Ascending aorta (tissue), 2 donors: ENCODE measurements at regions of chr9 and their contacts with region 1.

Region 1: GRCh38 chr9:134325817-134326723 is at the start of gene RXRA:
- DNase-seq: peak in 1 of 2 donors; percentile 87
- H3K4me3 ChIP-seq: peak within 1 kb of the TSS; percentile 86 to 91
- H3K27ac ChIP-seq: peak within 1 kb of the TSS; percentile 97 to 99
- H3K4me1 ChIP-seq: peaks cover 21 to 57% of the 10 kb centered on the region in 2 donors
- H3K27me3 ChIP-seq: no peaks in the 10 kb centered on the region
- CTCF ChIP-seq: peak in 1 of 3 experiments; percentile 34
- total RNA-seq, gene RXRA: 64.1 TPM

Region 2: GRCh38 chr9:134163353-134164196 is 162.5 kb before region 1 on chr9:
- intact Hi-C with region 1: loop called (anchors 1 kb)
- DNase-seq: peak in 1 of 2 donors; percentile 84
- H3K4me3 ChIP-seq: no peak overlapping the region
- H3K27ac ChIP-seq: no peak overlapping the region
- H3K4me1 ChIP-seq: peaks cover 8 to 16% of the 10 kb centered on the region in 2 donors
- H3K27me3 ChIP-seq: no peaks in the 10 kb centered on the region
- CTCF ChIP-seq: peak; percentile 43 to 57 (median 48)

Region 3: DNA sequence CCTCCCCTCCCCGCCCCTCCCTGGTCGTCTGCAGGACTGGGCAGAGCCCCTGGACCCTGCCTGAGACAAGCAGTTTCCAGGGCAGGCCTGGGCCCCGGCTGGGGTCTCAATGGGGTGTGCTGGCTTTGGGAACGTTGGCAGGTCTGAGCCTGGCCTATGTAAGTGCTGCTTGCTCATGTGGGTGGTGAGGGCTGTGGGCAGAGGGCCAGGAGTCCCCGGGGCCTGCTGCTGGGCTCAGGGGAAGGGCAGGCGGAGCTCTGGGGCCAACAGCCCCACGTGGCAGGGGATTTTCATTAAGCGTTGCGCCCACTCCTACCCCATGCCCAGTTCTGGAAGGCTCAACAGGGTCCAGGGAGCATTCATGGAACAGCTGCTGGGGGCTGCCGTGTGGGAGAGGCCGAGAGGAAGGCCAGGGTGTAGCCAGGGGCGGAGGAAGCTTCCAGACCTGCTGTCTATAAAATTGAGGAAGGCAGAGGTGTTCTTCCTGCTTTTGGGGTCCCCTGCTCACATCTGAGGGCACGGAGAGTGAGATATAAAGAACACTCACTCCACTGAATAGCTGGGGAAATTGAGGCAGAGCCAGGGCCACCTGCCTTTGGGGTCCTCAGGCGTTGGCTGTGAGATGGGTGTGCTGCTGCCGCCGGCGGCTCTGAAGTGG is 32.7 kb after region 1 on chr9:
- intact Hi-C with region 1: loop called (anchors 1 kb)
- DNase-seq: no peak
- H3K4me3 ChIP-seq: no peak overlapping the region
- H3K27ac ChIP-seq: peak overlapping the region in 1 of 2 donors; percentile 72
- H3K4me1 ChIP-seq: peaks cover 26 to 56% of the 10 kb centered on the region in 2 donors
- H3K27me3 ChIP-seq: no peaks in the 10 kb centered on the region
- CTCF ChIP-seq: no peak

Region 4: GRCh38 chr9:134443168-134444037 is 117.3 kb after region 1 on chr9:
- intact Hi-C with region 1: loop called (anchors 2 kb)
- DNase-seq: peak; percentile 73 to 95
- H3K4me3 ChIP-seq: no peak overlapping the region
- H3K27ac ChIP-seq: no peak overlapping the region
- H3K4me1 ChIP-seq: peaks cover 4 to 17% of the 10 kb centered on the region in 2 donors
- H3K27me3 ChIP-seq: no peaks in the 10 kb centered on the region
- CTCF ChIP-seq: peak; percentile 97 to 99 (median 98)

Region 5: DNA sequence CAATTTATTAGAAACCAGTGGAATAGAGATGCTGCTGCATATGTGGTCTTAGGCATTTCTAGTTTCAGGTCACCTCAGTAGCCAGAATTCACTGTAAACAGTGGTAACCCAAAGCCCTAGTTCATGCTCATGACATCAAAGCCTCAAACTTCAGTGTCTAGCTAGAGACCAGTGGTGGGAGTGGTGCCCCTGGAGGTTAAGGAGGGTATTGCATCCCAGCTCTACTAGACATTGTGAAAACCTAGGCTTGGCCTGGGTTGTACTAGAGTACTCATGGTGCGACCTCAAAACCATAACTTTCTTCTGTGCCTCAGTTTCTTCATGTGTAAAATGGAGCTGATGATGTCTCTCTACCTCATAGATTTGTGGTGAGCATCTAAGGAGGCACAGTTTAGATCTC is 334.3 kb after region 1 on chr9:
- intact Hi-C with region 1: loop called (anchors 5 kb)
- DNase-seq: no peak
- H3K4me3 ChIP-seq: no peak overlapping the region
- H3K27ac ChIP-seq: peak overlapping the region; percentile 79 to 88
- H3K4me1 ChIP-seq: peaks cover 33 to 59% of the 10 kb centered on the region in 2 donors
- H3K27me3 ChIP-seq: no peaks in the 10 kb centered on the region
- CTCF ChIP-seq: peak in 2 of 3 experiments; percentile 22 to 40

Region 6: GRCh38 chr9:134698587-134699342 is 372.7 kb after region 1 on chr9:
- intact Hi-C with region 1: no loop called
- DNase-seq: no peak
- H3K4me3 ChIP-seq: no peak overlapping the region
- H3K27ac ChIP-seq: no peak overlapping the region
- H3K4me1 ChIP-seq: peaks cover 2 to 8% of the 10 kb centered on the region in 2 donors
- H3K27me3 ChIP-seq: no peaks in the 10 kb centered on the region
- CTCF ChIP-seq: peak; percentile 87 to 95 (median 90)

Region 7: DNA sequence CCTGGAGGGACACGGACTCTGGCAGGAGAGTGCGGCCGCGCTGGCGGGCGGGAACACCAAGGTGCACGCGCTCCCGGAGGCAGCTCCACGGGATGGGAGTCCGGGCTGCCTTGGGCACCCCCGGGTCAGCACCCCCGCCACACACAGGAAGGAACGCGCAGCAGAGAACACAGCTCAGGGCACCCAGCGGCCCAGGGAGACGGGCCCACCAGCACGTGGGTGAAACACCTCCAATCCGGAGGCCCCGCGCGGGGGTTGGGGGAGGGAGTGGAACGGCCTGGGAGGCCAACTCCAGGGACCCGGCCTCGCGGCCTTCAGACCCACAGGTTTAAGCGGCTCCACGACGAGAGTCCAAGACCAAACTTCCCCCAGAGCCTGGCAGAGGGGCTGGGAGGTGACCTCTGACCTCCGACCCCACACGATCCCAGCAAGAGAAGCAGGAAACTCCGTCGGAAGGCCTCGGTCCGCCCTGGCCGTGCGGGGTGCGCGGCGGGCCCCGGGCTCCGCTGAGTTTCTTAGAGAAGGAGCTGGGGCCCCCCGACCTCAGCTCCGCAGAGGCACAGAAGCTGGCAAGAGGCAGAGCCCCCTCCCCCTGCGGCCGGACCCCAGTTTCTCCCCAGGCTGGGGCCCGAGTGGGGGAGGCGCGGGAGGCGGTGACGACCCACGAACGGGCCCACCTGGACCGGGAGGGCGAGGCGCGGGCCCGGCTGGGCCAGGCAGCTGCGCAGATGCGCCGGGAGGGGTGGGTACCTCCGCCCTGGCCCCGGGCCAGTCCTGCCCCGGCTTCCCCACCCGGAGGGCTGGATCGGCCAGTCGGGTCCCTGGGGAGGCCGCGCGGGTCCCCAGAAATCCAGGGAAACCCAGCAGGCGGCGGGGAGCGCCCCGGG is 1768.2 kb after region 1 on chr9:
- intact Hi-C with region 1: loop called (anchors 5 kb)
- DNase-seq: peak in 1 of 2 donors; percentile 91
- H3K4me3 ChIP-seq: peak overlapping the region; percentile 91 to 94
- H3K27ac ChIP-seq: peak overlapping the region; percentile 91 to 98
- H3K4me1 ChIP-seq: peaks cover 22 to 48% of the 10 kb centered on the region in 2 donors
- H3K27me3 ChIP-seq: no peaks in the 10 kb centered on the region
- CTCF ChIP-seq: peak in 2 of 3 experiments; percentile 9 to 19